ENCODE measurements at regions of chr6 and their contacts with region 1.

Region 1: DNA sequence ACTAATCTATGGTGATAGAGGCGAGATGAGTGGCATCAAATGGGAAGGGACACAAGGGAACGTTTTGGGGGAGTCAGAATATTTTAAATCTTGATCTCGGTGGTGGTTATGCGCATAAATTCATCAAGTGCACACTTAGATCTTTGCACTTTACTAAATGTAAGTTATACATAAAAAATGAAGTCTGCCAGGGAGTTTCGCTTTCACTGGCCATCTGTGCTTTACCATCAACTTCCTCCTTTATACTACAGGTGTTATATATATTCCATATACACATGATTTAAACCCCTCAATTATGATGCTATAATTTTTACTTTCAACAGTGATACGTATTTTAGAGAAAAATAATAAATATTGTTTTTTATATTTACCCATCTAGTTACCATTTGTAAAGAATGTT is 97.6 kb upstream of the AKIRIN2 start:
- DNase-seq: peak in 1 of 3 donors; percentile 31
- H3K4me3 ChIP-seq: no peak overlapping the region
- H3K4me3 Mint-ChIP-seq: no peak overlapping the region
- H3K27ac ChIP-seq: no peak overlapping the region
- H3K27ac Mint-ChIP-seq: no peak overlapping the region
- H3K4me1 ChIP-seq: peaks cover 14 to 22% of the 10 kb centered on the region in 2 donors
- H3K4me1 Mint-ChIP-seq: peaks cover 27% of the 10 kb centered on the region
- H3K27me3 ChIP-seq: no peaks in the 10 kb centered on the region
- H3K27me3 Mint-ChIP-seq: peaks cover 0 to 4% (median 1%) of the 10 kb centered on the region in 3 donors
- CTCF ChIP-seq: no peak

Region 2: DNA sequence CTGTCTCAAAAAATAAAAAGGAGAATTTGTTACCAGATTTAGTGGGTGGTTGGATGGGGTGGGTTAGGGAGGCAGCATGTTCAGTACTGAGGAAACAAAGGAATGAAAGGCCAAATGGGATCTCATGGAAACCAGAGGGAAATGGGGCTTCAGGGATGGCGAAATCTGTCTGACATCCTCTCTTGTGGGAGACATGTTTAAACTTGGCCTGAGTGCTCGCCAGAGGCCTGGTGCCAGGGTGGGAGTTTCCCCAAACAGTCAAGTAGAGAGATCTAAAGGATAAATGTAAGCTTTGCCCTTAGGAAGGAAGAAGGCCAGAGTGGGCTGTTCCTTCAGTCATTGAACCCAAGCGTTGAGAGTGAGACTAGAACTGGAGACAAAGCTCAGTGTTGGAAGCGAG is 35.8 kb before region 1 on chr6:
- intact Hi-C with region 1: loop called in 1 of 2 experiments (anchors 5 kb)
- DNase-seq: no peak
- H3K4me3 ChIP-seq: no peak overlapping the region
- H3K4me3 Mint-ChIP-seq: peak overlapping the region in 1 of 2 donors; percentile 20
- H3K27ac ChIP-seq: no peak overlapping the region
- H3K27ac Mint-ChIP-seq: peak overlapping the region in 3 of 7 donors; percentile 11 to 40 (median 16)
- H3K4me1 ChIP-seq: peaks cover 20 to 26% of the 10 kb centered on the region in 2 donors
- H3K4me1 Mint-ChIP-seq: peaks cover 24% of the 10 kb centered on the region
- H3K27me3 ChIP-seq: no peaks in the 10 kb centered on the region
- H3K27me3 Mint-ChIP-seq: no peaks in the 10 kb centered on the region
- CTCF ChIP-seq: no peak